ENCODE measurements at regions of chr22 and their contacts with region 1.

Region 1: DNA sequence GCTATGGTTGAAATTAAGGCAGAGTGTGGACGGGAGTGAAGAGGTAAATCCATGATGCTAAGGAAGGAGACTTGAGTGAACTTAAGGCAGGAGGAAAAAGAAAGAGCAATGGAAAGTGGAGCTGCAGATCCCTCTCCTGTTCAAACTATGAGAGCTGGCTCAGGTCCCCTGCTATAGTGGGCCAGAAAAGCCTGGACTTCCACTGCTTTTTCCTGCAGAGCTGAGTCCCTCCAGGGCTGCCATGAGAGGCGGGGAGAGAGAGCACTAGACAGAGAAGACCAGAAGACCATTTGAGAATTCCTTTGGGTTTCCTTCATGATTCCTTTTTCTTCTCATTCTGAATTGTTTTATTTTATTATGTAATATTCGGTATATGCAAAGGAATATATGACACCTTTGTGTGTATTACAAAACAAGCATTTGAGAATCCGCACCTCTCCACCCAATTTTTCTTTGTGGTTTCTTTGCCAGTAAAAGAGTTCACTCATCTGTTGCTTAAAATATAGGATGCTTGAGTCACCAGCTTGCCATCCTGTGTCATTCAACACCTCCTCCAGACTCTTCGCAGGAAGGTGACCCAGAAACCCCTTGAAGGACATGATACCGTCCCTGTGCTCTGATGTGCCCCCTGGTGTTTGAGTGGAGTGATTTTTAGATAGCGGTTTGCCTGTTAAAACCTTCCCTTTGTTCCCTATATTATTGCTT is 24.4 kb downstream of the SREBF2 start:
- DNase-seq: peak; percentile 59 to 89
- ATAC-seq: peak; percentile 89 to 95 (median 92)
- H3K4me3 ChIP-seq: no peak overlapping the region
- H3K4me3 Mint-ChIP-seq: peak overlapping the region; percentile 67
- H3K27ac ChIP-seq: peak overlapping the region; percentile 59
- H3K27ac Mint-ChIP-seq: peak overlapping the region; percentile 81 to 89
- H3K4me1 ChIP-seq: peaks cover 26% of the 10 kb centered on the region
- H3K4me1 Mint-ChIP-seq: peaks cover 43 to 48% of the 10 kb centered on the region in 2 donors
- H3K27me3 ChIP-seq: no peaks in the 10 kb centered on the region
- H3K27me3 Mint-ChIP-seq: no peaks in the 10 kb centered on the region
- CTCF ChIP-seq: peak; percentile 80

Region 2: GRCh38 chr22:41697126-41697775 is 160.1 kb before region 1 on chr22:
- intact Hi-C with region 1: loop called (anchors 1 kb)
- DNase-seq: peak; percentile 91 to 92
- ATAC-seq: peak; percentile 80 to 83 (median 81)
- H3K4me3 ChIP-seq: no peak overlapping the region
- H3K4me3 Mint-ChIP-seq: peak overlapping the region; percentile 61
- H3K27ac ChIP-seq: peak overlapping the region; percentile 10
- H3K27ac Mint-ChIP-seq: peak overlapping the region; percentile 30 to 78
- H3K4me1 ChIP-seq: peaks cover 18% of the 10 kb centered on the region
- H3K4me1 Mint-ChIP-seq: peaks cover 6 to 13% of the 10 kb centered on the region in 2 donors
- H3K27me3 ChIP-seq: no peaks in the 10 kb centered on the region
- H3K27me3 Mint-ChIP-seq: no peaks in the 10 kb centered on the region
- CTCF ChIP-seq: peak; percentile 98

Region 3: GRCh38 chr22:41746567-41747400 is 110.5 kb before region 1 on chr22:
- intact Hi-C with region 1: loop called (anchors 1 kb)
- DNase-seq: peak; percentile 33 to 81
- ATAC-seq: peak; percentile 68 to 91 (median 79)
- H3K4me3 ChIP-seq: no peak overlapping the region
- H3K4me3 Mint-ChIP-seq: no peak overlapping the region
- H3K27ac ChIP-seq: no peak overlapping the region
- H3K27ac Mint-ChIP-seq: no peak overlapping the region
- H3K4me1 ChIP-seq: peaks cover 5% of the 10 kb centered on the region
- H3K4me1 Mint-ChIP-seq: peaks cover 8 to 14% of the 10 kb centered on the region in 2 donors
- H3K27me3 ChIP-seq: peaks cover 2% of the 10 kb centered on the region
- H3K27me3 Mint-ChIP-seq: peaks cover 0 to 8% of the 10 kb centered on the region in 2 donors
- CTCF ChIP-seq: peak; percentile 39

Region 4: DNA sequence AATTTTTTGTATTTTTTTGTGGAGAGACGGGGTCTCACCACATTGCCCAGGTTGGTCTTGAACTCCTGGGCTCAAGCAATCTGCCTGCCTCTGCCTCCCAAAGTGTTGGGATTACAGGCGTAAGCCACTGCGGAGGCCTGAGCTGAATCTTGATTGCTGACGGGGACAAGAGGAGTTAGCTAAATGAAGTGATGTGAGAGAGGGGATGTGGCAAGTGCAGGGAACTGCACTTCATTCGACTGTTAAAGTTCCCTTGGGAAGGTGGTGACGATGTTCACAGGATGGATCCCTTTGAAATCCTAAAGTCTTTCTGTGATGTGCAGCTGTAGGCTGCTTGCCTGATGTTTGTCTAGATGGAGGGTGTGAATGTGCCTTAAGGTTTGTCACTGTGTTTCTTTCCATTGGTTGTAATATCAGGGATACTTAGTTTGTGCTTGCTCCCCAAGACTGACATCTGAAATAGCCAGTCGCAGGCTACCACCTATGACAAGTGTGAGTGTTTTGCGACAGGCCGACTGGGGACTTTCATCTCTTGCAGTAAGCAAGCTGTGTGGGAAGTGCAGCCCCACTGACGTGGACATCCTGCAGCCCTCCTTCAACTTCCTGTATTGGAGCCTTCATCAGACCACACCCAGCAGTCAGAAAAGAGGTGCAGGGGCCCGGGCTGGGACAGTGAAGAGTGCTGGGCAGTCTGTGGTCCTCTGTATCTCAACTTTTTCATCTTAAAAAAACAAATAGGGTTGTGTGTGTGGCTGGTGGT is 76.4 kb before region 1 on chr22:
- intact Hi-C with region 1: loop called (anchors 5 kb)
- DNase-seq: peak; percentile 82 to 98
- ATAC-seq: peak; percentile 92 to 99 (median 95)
- H3K4me3 ChIP-seq: peak overlapping the region; percentile 58
- H3K4me3 Mint-ChIP-seq: peak overlapping the region; percentile 82
- H3K27ac ChIP-seq: peak overlapping the region; percentile 96
- H3K27ac Mint-ChIP-seq: peak overlapping the region; percentile 98 to 99
- H3K4me1 ChIP-seq: peaks cover 36% of the 10 kb centered on the region
- H3K4me1 Mint-ChIP-seq: peaks cover 41 to 43% of the 10 kb centered on the region in 2 donors
- H3K27me3 ChIP-seq: no peaks in the 10 kb centered on the region
- H3K27me3 Mint-ChIP-seq: no peaks in the 10 kb centered on the region
- CTCF ChIP-seq: no peak

Region 5: GRCh38 chr22:41822317-41823060 is 34.8 kb before region 1 on chr22:
- intact Hi-C with region 1: loop called (anchors 1 kb)
- DNase-seq: peak in 1 of 2 donors; percentile 85
- ATAC-seq: peak; percentile 68 to 97 (median 81)
- H3K4me3 ChIP-seq: no peak overlapping the region
- H3K4me3 Mint-ChIP-seq: no peak overlapping the region
- H3K27ac ChIP-seq: no peak overlapping the region
- H3K27ac Mint-ChIP-seq: peak overlapping the region in 1 of 2 donors; percentile 61
- H3K4me1 ChIP-seq: no peaks in the 10 kb centered on the region
- H3K4me1 Mint-ChIP-seq: peaks cover 9 to 27% of the 10 kb centered on the region in 2 donors
- H3K27me3 ChIP-seq: no peaks in the 10 kb centered on the region
- H3K27me3 Mint-ChIP-seq: no peaks in the 10 kb centered on the region
- CTCF ChIP-seq: peak; percentile 61

Region 6: GRCh38 chr22:41899992-41900651 is 42.8 kb after region 1 on chr22:
- intact Hi-C with region 1: no loop called
- DNase-seq: no peak
- ATAC-seq: no peak
- H3K4me3 ChIP-seq: no peak overlapping the region
- H3K4me3 Mint-ChIP-seq: no peak overlapping the region
- H3K27ac ChIP-seq: no peak overlapping the region
- H3K27ac Mint-ChIP-seq: no peak overlapping the region
- H3K4me1 ChIP-seq: no peaks in the 10 kb centered on the region
- H3K4me1 Mint-ChIP-seq: no peaks in the 10 kb centered on the region
- H3K27me3 ChIP-seq: no peaks in the 10 kb centered on the region
- H3K27me3 Mint-ChIP-seq: no peaks in the 10 kb centered on the region
- CTCF ChIP-seq: no peak

Region 7: DNA sequence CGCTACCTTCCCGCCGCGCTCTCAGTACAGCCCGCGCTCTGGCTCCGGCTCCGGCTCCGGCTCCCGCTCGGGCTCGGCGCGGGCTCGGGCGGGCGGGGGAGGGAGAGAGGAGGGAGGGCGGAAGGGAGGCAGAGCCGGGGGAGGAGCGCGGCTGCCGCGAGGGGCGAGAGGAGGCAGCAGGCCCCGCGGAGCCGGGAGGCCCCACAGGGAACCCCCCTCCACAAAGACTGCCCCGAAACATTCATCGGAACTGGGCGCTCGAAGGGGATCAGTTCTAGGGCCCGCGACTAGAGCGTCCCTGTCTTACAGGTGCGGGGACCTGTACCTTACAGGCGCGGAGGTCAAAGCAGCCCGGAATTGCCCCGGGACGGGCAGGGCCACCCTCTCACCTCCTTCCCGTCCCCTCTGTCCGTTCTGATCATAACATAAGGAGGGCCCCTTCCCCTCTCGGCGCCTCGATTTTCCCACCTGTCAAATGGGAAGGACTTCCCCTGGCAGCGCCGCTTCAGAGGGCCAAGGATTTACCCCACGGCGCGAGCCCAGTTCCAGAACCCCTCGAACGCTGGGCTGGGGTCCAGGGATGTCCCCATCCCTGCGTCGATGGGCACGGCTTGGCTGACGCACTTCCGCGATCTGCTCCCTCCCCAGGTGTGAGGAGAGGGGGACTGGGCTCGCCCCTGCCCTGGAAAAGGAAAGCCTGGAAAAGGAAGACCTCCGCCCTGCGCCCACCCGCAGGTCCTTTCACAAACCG is 57.9 kb after region 1 on chr22 and contains the start of gene SHISA8:
- intact Hi-C with region 1: no loop called
- DNase-seq: peak; percentile 38 to 77
- ATAC-seq: peak; percentile 63 to 69 (median 69)
- H3K4me3 ChIP-seq: peak within 1 kb of the TSS; percentile 29
- H3K4me3 Mint-ChIP-seq: peak within 1 kb of the TSS; percentile 37
- H3K27ac ChIP-seq: no peak within 1 kb of the TSS
- H3K27ac Mint-ChIP-seq: peak within 1 kb of the TSS in 1 of 2 donors; percentile 14
- H3K4me1 ChIP-seq: peaks cover 63% of the 10 kb centered on the region
- H3K4me1 Mint-ChIP-seq: peaks cover 0 to 27% of the 10 kb centered on the region in 2 donors
- H3K27me3 ChIP-seq: peaks cover 67% of the 10 kb centered on the region
- H3K27me3 Mint-ChIP-seq: peaks cover 24 to 34% of the 10 kb centered on the region in 2 donors
- CTCF ChIP-seq: no peak
- total RNA-seq, gene SHISA8: 0.24 TPM in 1 of 3 donors, not detected in the others

Region 8: DNA sequence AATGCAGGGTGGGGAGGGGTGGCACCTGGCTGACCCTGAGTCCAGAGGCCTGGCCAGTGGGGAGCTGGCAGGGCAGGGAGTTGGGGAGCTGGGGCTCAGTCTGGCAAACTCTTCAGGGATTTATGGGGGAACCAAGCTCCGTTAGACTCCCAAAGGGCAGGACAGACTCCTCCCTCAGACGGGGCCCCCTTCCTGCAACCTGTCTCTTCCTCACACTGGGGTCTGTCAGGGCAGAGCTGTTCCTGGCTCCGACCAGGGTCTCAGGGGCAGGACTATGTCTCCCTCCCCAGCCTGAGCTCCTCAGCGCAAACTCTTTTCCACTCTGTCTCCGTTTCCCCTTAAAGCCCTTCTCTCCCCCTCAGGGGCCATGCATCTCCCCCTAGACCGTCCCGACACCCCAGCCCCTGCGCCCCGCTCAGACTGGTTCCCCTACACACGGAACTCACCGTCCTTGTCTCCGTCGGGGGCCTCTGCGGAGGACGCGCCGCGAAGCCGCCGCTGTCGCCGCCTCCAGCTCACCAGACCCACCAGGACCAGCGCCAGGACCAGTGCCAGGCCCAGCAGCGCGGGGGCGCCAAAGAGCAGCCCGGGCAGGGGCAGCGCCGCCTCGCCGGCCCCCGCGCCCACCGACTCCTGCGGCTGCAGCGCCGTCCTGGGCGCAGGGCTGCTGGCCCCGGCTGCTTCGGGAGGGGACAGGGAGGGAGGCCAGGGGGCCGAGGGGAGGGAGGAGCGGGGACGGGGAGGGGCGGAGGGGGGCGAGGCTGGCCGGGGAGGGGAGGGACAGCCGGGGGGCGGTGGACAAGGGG is 68.6 kb after region 1 on chr22:
- intact Hi-C with region 1: no loop called
- DNase-seq: peak; percentile 76 to 87
- ATAC-seq: peak; percentile 85 to 93 (median 92)
- H3K4me3 ChIP-seq: peak overlapping the region; percentile 48
- H3K4me3 Mint-ChIP-seq: peak overlapping the region; percentile 72
- H3K27ac ChIP-seq: peak overlapping the region; percentile 73
- H3K27ac Mint-ChIP-seq: peak overlapping the region in 1 of 2 donors; percentile 51
- H3K4me1 ChIP-seq: peaks cover 40% of the 10 kb centered on the region
- H3K4me1 Mint-ChIP-seq: peaks cover 5 to 7% of the 10 kb centered on the region in 2 donors
- H3K27me3 ChIP-seq: peaks cover 6% of the 10 kb centered on the region
- H3K27me3 Mint-ChIP-seq: peaks cover 0 to 23% of the 10 kb centered on the region in 2 donors
- CTCF ChIP-seq: peak; percentile 78

Measured in natural killer cell (primary cell).